ENCODE measurements at regions of chr5 and their contacts with region 1.

Region 1: DNA sequence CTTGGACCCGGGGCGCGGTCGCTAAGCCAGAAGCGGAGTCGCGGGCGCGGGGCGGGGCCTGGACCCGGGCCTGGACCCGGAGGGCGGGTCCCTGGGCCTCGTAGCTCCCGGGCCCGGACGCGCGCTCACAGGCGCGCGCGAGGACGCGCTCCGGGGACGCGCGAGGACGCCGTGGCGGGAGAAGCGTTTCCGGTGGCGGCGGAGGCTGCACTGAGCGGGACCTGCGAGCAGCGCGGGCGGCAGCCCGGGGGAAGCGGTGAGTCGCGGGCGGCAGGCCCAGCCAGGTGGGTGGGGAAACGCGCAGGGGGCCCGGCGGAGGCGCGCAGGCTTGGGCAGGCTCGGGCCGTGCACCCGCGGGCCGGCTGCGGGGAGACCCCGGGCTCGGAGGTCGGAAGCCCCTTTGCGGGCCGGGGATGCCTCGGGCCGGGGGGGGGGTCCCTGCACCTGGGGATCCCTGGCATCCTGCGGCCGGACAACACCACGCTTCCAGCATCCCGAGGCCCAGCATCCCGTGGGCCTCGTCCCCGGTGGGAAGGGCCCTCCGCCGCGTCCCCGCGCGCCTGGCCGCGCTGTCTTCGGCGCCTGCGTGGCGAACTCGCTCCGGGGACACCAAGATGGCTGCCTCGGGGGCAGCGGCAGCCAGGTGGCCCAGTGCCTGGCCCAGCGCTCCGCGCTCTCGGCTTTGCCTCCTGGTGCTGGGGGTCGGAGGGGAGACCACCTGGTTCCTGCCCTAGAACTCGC is at the start of gene SFXN1:
- DNase-seq: peak; percentile 61 to 82 (median 71)
- ATAC-seq: peak; percentile 56 to 76
- H3K4me3 Mint-ChIP-seq: peak within 1 kb of the TSS; percentile 89 to 98 (median 96)
- H3K27ac Mint-ChIP-seq: peak within 1 kb of the TSS; percentile 83 to 98 (median 96)
- H3K4me1 Mint-ChIP-seq: peaks cover 28 to 56% (median 51%) of the 10 kb centered on the region in 4 donors
- H3K27me3 Mint-ChIP-seq: peaks cover 0 to 8% (median 0%) of the 10 kb centered on the region in 5 donors
- polyA plus RNA-seq, gene SFXN1: 54.0 to 76.9 (median 57.4) TPM

Region 2: GRCh38 chr5:175306411-175306810 is 172.1 kb before region 1 on chr5:
- POLR2A ChIA-PET with region 1: no interaction called
- DNase-seq: no peak
- ATAC-seq: no peak
- H3K4me3 Mint-ChIP-seq: no peak overlapping the region
- H3K27ac Mint-ChIP-seq: no peak overlapping the region
- H3K4me1 Mint-ChIP-seq: no peaks in the 10 kb centered on the region
- H3K27me3 Mint-ChIP-seq: peaks cover 5 to 31% (median 11%) of the 10 kb centered on the region in 5 donors

Region 3: DNA sequence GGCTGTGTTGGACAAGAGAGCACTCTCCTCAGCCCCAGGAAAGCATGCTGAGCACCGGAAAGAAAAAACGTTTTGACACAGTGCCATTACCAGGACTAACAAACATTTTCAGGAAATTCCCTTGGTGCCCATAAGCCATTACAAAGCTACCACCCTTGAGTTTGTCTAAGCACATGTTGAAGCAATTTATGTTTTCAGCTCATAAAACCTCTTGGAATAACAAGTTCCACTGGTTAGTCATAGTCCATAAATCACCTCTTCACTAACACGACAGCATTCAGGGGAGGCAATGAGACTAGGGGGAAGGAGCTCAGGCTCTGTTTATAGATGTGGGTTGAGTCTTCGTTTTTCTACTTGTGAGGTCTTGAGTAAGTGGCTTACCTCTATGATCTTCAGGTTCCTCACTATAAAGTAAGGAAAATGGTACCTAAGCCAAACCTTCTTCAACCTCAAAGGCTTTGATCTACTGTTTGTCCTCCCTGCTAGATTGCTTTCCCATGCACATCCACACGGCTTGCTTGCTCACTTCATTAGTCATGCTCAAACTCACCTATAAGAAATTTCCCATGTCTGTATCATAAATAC is 100.0 kb before region 1 on chr5:
- POLR2A ChIA-PET with region 1: no interaction called
- DNase-seq: no peak
- ATAC-seq: no peak
- H3K4me3 Mint-ChIP-seq: no peak overlapping the region
- H3K27ac Mint-ChIP-seq: no peak overlapping the region
- H3K4me1 Mint-ChIP-seq: no peaks in the 10 kb centered on the region
- H3K27me3 Mint-ChIP-seq: peaks cover 24 to 69% (median 36%) of the 10 kb centered on the region in 5 donors

Region 4: GRCh38 chr5:175464074-175464941 is 14.2 kb before region 1 on chr5:
- POLR2A ChIA-PET with region 1: interaction called, 14 read pairs
- DNase-seq: peak in 9 of 10 donors; percentile 38 to 75 (median 64)
- ATAC-seq: peak; percentile 99 to 100
- H3K4me3 Mint-ChIP-seq: peak overlapping the region in 6 of 10 donors; percentile 10 to 47 (median 24)
- H3K27ac Mint-ChIP-seq: peak overlapping the region in 7 of 10 donors; percentile 37 to 81 (median 70)
- H3K4me1 Mint-ChIP-seq: peaks cover 6 to 14% (median 8%) of the 10 kb centered on the region in 4 donors
- H3K27me3 Mint-ChIP-seq: peaks cover 0 to 7% (median 0%) of the 10 kb centered on the region in 5 donors

Region 5: GRCh38 chr5:175517818-175518450 is 39.4 kb after region 1 on chr5:
- POLR2A ChIA-PET with region 1: interaction called, 65 read pairs
- DNase-seq: peak in 3 of 10 donors; percentile 13 to 22 (median 21)
- ATAC-seq: peak in 1 of 2 donors; percentile 40
- H3K4me3 Mint-ChIP-seq: peak overlapping the region in 9 of 10 donors; percentile 23 to 71 (median 59)
- H3K27ac Mint-ChIP-seq: peak overlapping the region; percentile 66 to 96 (median 87)
- H3K4me1 Mint-ChIP-seq: peaks cover 40 to 80% (median 67%) of the 10 kb centered on the region in 4 donors
- H3K27me3 Mint-ChIP-seq: no peaks in the 10 kb centered on the region

Region 6: DNA sequence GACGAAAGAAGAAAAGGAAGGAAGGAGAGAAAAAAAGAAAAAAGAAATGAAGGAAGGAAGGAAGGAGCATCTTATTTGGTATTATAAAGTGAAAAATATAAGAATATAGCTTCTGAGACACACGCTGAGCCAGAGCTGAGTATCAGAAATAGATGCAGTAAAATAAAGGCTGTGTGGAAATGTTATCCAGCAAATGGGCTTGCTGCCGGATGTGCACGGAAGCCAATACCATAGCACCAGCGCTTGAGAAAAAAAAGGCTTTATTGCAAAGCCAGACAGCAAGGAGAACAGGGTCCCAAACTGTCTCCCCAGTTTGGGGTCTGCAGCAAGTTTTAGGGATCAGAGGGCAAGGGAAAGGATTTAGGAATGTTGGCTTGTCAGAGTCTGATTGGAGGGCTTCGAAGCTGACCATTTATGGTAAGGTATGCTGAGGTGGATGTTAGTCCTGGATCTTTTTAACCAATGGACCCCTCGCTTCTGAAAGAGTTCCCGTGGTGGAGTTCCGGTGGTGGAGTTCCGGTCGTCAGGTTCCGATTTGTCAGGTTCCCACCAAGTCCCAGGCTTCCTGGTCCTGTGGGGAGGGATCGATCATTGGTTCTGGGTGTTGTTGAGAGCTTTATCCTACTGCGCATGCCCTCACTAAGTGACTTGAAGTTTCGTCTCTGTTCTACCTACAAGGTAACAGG is 70.2 kb after region 1 on chr5:
- POLR2A ChIA-PET with region 1: no interaction called
- DNase-seq: no peak
- ATAC-seq: peak in 1 of 2 donors; percentile 33
- H3K4me3 Mint-ChIP-seq: peak overlapping the region in 7 of 10 donors; percentile 9 to 53 (median 43)
- H3K27ac Mint-ChIP-seq: peak overlapping the region in 2 of 10 donors; percentile 13 to 23
- H3K4me1 Mint-ChIP-seq: peaks cover 6 to 24% (median 12%) of the 10 kb centered on the region in 4 donors
- H3K27me3 Mint-ChIP-seq: peaks cover 2 to 36% (median 10%) of the 10 kb centered on the region in 5 donors